ENCODE measurements at regions of chr1 and their contacts with region 1.

Region 1: DNA sequence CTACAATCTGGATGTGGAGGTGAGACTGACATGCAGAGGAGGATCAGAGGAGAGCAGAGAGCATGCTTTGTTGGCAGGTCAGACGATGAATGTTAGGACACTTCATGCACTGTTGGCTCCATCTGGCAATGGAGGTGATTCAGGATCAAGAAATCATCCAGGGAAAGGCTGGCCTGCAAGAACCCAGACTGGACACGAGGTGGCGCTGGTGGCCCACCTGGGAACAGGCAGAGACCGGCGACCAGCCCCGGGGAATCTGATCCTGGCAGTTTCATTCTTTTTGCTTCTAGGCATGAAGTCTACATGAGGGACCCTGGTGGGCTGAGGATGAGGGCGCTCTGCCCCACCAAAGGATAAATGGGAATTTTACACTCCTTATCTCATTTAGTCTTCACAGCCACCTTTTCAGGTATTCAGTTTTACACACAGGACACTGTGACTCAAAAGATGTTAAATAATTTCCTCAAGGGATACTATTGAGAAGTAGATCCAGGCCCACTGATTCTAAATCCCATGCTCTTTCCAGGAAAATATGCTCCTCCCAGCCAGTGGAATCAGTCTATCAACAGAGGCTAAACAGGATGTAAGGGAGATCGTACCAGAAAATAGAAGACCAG is 26.2 kb upstream of the SCMH1 start:
- DNase-seq: peak; percentile 38 to 67 (median 54)
- H3K4me3 ChIP-seq: no peak overlapping the region
- H3K4me3 Mint-ChIP-seq: peak overlapping the region in 1 of 7 donors; percentile 33
- H3K27ac ChIP-seq: no peak overlapping the region
- H3K27ac Mint-ChIP-seq: no peak overlapping the region
- H3K4me1 ChIP-seq: peaks cover 3% of the 10 kb centered on the region
- H3K4me1 Mint-ChIP-seq: peaks cover 0 to 5% (median 4%) of the 10 kb centered on the region in 3 donors
- H3K27me3 ChIP-seq: no peaks in the 10 kb centered on the region
- H3K27me3 Mint-ChIP-seq: peaks cover 8 to 10% of the 10 kb centered on the region in 2 donors

Region 2: DNA sequence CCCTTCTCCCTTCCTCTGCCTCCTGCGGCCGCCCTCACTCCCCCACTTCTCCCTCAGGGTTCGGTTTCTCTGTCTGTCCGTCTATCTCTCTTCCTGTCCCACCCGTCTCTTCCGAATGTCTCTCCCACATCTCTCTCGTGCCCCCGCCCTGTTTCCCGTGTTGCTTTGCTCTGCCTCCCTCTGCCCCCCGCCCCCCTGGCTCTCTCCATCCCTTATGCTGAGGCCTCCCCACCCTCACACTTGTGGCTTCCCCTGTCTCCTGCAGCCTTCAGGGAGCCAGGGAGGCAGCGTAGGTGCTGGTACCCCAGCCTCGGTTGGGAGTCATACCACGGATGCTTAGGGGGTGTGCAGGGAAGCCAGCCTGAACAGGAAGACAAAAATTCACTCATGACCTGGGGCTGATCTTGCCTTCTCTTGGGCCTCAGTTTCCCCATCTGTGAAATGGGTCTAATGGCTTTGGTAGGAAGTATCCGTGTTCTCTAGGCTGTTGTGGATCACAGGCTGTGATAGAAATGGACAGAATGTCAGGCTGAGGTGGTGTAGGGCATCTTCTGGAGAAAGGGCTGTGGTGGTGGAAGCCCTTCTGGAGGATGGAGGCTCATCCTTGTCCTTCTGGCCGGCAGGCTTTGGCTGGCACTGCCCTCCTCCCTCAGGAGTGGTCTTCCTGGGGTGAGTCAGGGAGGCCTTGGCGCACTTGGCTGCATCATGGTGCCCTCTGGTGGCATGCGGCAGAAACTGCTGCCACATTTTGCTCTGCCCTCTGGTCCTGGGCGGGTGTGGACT is 148.5 kb after region 1 on chr1:
- CTCF ChIA-PET with region 1: interaction called, 13 read pairs
- POLR2A ChIA-PET with region 1: no interaction called
- DNase-seq: peak; percentile 39 to 73 (median 43)
- H3K4me3 ChIP-seq: no peak overlapping the region
- H3K4me3 Mint-ChIP-seq: no peak overlapping the region
- H3K27ac ChIP-seq: no peak overlapping the region
- H3K27ac Mint-ChIP-seq: peak overlapping the region in 1 of 8 donors; percentile 66
- H3K4me1 ChIP-seq: no peaks in the 10 kb centered on the region
- H3K4me1 Mint-ChIP-seq: no peaks in the 10 kb centered on the region
- H3K27me3 ChIP-seq: no peaks in the 10 kb centered on the region
- H3K27me3 Mint-ChIP-seq: peaks cover 20 to 24% of the 10 kb centered on the region in 2 donors

Region 3: DNA sequence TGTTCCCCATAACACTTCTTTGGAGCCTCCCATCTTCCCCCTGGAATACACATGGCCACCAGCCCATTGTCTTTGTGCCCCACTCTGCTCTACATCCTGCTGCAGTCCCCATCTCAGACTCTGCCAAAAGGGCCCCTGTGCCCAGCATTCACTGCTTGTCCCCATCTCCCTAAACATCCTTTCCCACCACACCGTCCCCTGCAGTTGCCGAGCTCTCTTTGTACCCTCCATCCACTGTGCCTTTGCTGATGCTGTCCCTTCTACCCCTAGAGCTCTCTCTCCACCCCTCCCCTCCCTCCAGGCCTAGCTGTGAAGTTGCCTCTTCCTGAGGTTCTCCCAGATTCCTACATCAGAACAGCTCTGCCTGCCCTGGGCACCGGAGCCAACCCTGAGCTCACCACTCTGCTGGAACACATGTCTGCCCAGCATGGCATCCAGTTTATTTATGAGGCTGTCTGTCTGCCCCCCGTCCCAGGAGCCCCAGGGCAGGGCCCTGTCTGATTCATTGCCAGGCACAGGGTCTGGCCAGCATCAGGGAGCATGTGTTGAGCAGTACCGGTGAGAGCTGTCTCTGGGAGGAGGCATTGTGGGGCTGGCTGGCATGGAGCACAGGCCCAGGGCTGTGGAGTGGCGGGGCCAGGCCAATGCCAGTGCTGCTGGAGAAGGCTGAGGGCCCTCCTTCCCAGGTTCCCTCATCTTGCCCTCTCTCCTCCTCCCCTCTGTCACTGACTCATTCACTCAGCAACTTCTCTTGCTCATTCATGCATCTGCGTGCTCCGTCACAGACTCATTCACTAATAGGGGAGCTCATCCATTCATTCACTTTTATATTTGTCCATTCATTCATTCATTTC is 187.4 kb after region 1 on chr1:
- CTCF ChIA-PET with region 1: no interaction called
- POLR2A ChIA-PET with region 1: no interaction called
- DNase-seq: peak in 1 of 5 donors; percentile 40
- H3K4me3 ChIP-seq: no peak overlapping the region
- H3K4me3 Mint-ChIP-seq: no peak overlapping the region
- H3K27ac ChIP-seq: no peak overlapping the region
- H3K27ac Mint-ChIP-seq: no peak overlapping the region
- H3K4me1 ChIP-seq: no peaks in the 10 kb centered on the region
- H3K4me1 Mint-ChIP-seq: no peaks in the 10 kb centered on the region
- H3K27me3 ChIP-seq: no peaks in the 10 kb centered on the region
- H3K27me3 Mint-ChIP-seq: peaks cover 3 to 4% of the 10 kb centered on the region in 2 donors